Naive thymus-derived CD4-positive, alpha-beta T cell (primary cell): ENCODE measurements at regions of chrX and their contacts with region 1.

Region 1: DNA sequence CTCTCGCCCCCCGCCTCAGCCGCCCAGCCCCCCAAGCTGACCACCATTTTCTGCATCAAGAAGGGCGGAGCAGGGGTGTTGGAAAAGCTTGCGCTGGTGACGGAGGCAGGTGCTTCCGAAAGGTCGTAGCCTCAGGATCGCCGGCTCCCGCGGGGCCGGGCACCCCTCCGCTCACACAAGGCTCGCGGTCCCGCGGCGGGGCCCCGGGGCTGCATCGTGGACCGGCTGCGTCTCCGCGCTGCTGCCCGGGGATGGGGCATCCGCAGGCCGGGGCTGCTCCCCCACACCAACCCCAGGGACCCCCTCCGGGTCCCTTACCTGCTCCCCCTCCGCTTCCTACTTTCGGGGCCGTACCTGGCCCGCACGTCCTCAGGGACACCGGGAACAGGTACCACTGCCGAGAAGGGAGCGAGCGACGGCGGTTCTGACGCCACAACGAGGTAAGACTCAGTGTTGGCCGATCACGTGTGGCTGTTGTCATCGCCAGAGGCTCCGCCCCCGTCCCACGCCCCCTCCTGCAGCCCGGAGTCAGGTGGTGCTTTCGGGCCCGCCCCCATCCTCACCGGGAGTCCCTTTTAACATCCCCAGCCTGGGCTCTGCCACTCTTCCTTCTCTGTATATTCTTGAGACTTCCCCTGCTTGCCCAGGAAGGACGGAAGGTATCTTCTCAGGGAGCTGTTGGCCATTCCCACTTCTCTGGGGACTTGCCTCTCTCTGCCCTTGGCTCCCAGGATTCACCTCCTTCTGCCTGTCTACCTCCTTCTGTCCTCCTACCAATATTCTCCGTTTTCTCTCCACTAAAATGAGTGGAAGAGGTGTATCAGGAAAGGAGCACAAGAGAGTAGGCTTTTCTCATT is at the start of gene BEX2:
- DNase-seq: peak; percentile 64 to 87 (median 83)
- ATAC-seq: peak; percentile 100
- H3K4me3 ChIP-seq: peak within 1 kb of the TSS; percentile 78
- H3K4me3 Mint-ChIP-seq: peak within 1 kb of the TSS; percentile 69 to 89 (median 81)
- H3K27ac ChIP-seq: peak within 1 kb of the TSS; percentile 87
- H3K27ac Mint-ChIP-seq: peak within 1 kb of the TSS; percentile 49 to 92 (median 82)
- H3K4me1 ChIP-seq: no peaks in the 10 kb centered on the region
- H3K4me1 Mint-ChIP-seq: peaks cover 0 to 8% (median 6%) of the 10 kb centered on the region in 7 donors
- H3K27me3 ChIP-seq: no peaks in the 10 kb centered on the region
- H3K27me3 Mint-ChIP-seq: no peaks in the 10 kb centered on the region
- total RNA-seq, gene BEX2: 4.8 to 48.5 (median 42.1) TPM

Region 2: GRCh38 chrX:102995316-102995715 is 315.5 kb before region 1 on chrX:
- CTCF ChIA-PET with region 1: no interaction called
- POLR2A ChIA-PET with region 1: no interaction called
- intact Hi-C with region 1: no loop called
- DNase-seq: no peak
- ATAC-seq: no peak
- H3K4me3 ChIP-seq: no peak overlapping the region
- H3K4me3 Mint-ChIP-seq: no peak overlapping the region
- H3K27ac ChIP-seq: no peak overlapping the region
- H3K27ac Mint-ChIP-seq: no peak overlapping the region
- H3K4me1 ChIP-seq: no peaks in the 10 kb centered on the region
- H3K4me1 Mint-ChIP-seq: no peaks in the 10 kb centered on the region
- H3K27me3 ChIP-seq: no peaks in the 10 kb centered on the region
- H3K27me3 Mint-ChIP-seq: no peaks in the 10 kb centered on the region

Region 3: DNA sequence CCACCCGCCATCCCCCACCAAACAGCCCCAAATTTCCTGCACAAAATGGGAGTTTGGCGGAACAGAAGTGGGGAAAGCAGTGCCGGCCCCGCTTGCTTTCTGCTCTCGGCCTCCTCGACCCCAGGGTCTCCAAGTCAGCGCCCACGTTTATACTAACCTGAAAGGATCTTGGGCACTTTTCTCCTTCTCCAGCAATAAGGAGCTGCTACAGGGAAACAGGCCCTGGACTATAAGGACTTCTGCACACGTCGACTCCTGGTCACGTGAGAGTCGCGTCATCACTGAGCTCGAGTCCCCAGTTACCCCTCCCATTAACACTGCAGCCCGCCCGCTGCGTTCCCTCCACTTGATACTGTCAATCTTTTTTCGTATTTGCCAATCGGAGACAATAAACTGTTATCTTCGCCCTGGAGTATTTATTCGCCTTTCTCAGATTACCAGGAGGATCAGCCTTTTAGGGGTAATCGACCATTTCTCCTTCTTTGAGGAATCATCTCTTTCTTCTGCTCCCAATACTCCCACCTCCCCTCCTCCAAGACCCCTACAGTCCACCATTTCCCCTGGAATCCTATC is 55.8 kb before region 1 on chrX and contains the start of gene TCEAL8:
- CTCF ChIA-PET with region 1: no interaction called
- POLR2A ChIA-PET with region 1: interaction called, 4 read pairs
- intact Hi-C with region 1: loop called (anchors 1 to 5 kb)
- DNase-seq: peak in 8 of 9 donors; percentile 28 to 66 (median 47)
- ATAC-seq: peak; percentile 94
- H3K4me3 ChIP-seq: peak within 1 kb of the TSS; percentile 85
- H3K4me3 Mint-ChIP-seq: peak within 1 kb of the TSS; percentile 92 to 98 (median 96)
- H3K27ac ChIP-seq: peak within 1 kb of the TSS; percentile 85
- H3K27ac Mint-ChIP-seq: peak within 1 kb of the TSS; percentile 87 to 97 (median 94)
- H3K4me1 ChIP-seq: no peaks in the 10 kb centered on the region
- H3K4me1 Mint-ChIP-seq: peaks cover 12 to 33% (median 20%) of the 10 kb centered on the region in 7 donors
- H3K27me3 ChIP-seq: no peaks in the 10 kb centered on the region
- H3K27me3 Mint-ChIP-seq: peaks cover 0 to 11% (median 0%) of the 10 kb centered on the region in 5 donors
- total RNA-seq, gene TCEAL8: 12.2 to 35.0 (median 33.2) TPM

Region 4: GRCh38 chrX:104156630-104157529 is 846.1 kb after region 1 on chrX and contains the start of gene SLC25A53:
- CTCF ChIA-PET with region 1: no interaction called
- POLR2A ChIA-PET with region 1: no interaction called
- intact Hi-C with region 1: loop called (anchors 5 to 10 kb)
- DNase-seq: peak; percentile 53 to 81 (median 71)
- ATAC-seq: peak; percentile 91
- H3K4me3 ChIP-seq: peak within 1 kb of the TSS; percentile 87
- H3K4me3 Mint-ChIP-seq: peak within 1 kb of the TSS; percentile 87 to 100 (median 98)
- H3K27ac ChIP-seq: peak within 1 kb of the TSS; percentile 85
- H3K27ac Mint-ChIP-seq: peak within 1 kb of the TSS; percentile 97 to 100 (median 99)
- H3K4me1 ChIP-seq: no peaks in the 10 kb centered on the region
- H3K4me1 Mint-ChIP-seq: peaks cover 6 to 25% (median 15%) of the 10 kb centered on the region in 7 donors
- H3K27me3 ChIP-seq: no peaks in the 10 kb centered on the region
- H3K27me3 Mint-ChIP-seq: no peaks in the 10 kb centered on the region
- total RNA-seq, gene SLC25A53: 7.2 to 18.9 (median 10.4) TPM